ENCODE measurements at regions of chr2 and their contacts with region 1.

Region 1: DNA sequence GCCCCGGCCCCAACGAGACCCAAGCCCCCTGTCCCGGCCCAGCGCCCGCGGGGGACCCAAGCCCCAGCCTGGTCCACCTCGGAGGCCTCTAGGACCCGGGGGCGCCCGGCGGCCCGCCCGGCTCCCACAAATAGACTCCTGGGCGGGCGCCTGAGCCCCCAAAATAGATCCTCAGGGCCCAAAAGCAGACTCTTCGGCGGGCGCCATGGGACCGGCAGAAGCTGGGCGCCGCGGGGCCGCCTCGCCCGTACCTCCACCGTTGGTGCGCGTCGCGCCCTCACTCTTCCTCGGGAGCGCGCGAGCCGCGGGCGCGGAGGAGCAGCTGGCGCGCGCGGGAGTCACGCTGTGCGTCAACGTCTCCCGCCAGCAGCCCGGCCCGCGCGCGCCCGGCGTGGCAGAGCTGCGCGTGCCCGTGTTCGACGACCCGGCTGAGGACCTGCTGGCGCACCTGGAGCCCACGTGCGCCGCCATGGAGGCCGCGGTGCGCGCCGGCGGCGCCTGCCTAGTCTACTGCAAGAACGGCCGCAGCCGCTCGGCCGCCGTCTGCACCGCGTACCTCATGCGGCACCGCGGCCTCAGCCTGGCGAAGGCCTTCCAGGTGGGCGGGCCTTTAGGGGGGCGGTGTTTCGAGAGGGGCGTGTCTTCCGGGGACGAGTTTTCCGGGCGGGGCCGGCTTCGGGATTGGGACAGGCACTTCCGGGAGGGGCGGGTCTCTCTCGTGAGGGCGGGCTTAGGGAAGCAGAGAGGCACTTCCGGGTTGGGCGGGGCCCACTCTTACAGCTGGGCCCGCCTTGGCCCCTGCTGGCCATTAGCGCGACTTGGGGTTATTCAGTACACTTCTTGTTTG is 546 bp downstream of the DUSP28 start:
- DNase-seq: peak; percentile 98
- H3K4me3 Mint-ChIP-seq: peak overlapping the region; percentile 83
- H3K27ac Mint-ChIP-seq: peak overlapping the region; percentile 87
- H3K4me1 Mint-ChIP-seq: peaks cover 63% of the 10 kb centered on the region
- H3K27me3 Mint-ChIP-seq: no peaks in the 10 kb centered on the region

Region 2: DNA sequence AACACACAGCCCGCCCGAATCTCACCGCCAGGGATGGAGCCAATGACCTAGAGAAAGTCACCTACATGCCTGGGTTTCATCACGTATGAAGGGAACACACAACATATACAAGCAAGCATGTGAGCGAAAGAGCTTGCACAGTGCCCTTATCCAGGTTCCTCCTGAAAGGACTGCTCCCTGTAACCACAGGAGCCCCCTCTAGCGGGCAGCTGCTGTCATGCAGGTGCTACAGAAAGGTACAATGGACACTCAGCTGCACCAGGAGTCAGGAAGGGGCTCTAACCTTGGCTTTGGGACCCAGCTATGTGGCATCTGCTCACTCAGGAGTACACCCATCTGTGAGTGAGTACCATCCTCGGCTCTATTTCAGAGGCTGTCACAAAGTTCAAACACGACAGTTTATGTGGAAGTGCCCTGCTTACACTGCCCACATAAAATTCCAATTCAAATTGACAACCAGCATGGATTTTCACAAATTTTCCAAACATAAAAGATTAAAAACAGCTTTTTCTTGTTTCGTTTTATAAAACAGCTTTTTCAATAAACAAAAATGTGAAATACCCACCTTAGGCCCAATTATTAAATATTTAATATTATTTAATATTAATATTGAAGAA is 539.1 kb before region 1 on chr2:
- intact Hi-C with region 1: loop called (anchors 2 kb)
- DNase-seq: peak; percentile 48
- H3K4me3 Mint-ChIP-seq: no peak overlapping the region
- H3K27ac Mint-ChIP-seq: no peak overlapping the region
- H3K4me1 Mint-ChIP-seq: peaks cover 19% of the 10 kb centered on the region
- H3K27me3 Mint-ChIP-seq: no peaks in the 10 kb centered on the region

Region 3: DNA sequence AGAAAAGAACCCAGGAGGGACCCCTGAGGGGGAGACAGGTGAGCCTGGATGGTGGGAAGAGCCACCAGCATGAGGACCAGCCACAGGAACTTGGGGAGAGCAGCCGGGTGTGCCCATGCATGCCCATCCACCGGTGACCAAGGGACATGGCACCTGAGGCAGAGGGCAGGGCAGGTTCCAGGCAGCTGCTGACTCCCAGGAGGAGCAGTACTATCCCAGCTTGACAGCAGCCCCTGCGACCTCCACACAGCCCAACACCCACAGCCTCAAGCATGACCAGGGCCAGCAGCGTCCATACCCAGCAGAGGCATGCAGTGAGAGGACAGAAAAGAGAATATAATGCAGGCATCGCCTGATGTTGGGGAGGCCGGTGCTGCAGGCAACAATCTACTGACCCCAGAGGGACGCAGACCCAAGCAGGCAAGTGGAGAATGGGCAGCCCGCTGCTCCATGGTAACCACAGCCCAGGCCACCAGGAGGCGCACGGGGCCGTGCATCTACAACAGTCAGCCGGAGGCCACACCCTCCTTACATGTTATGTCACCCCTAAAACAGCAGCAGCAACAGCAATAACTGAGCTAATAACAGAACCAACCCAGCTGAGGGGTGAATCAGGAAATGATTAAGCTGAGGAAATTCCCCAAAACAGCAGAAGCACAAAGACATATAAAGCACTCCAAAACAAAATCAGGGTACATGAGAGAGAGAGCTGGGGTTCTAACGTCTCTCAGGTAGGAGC is 47.0 kb before region 1 on chr2:
- intact Hi-C with region 1: loop called (anchors 1 kb)
- DNase-seq: peak; percentile 74
- H3K4me3 Mint-ChIP-seq: no peak overlapping the region
- H3K27ac Mint-ChIP-seq: peak overlapping the region; percentile 43
- H3K4me1 Mint-ChIP-seq: peaks cover 11% of the 10 kb centered on the region
- H3K27me3 Mint-ChIP-seq: no peaks in the 10 kb centered on the region

Region 4: GRCh38 chr2:240595496-240596470 is 35.1 kb after region 1 on chr2:
- intact Hi-C with region 1: no loop called
- DNase-seq: peak; percentile 43
- H3K4me3 Mint-ChIP-seq: no peak overlapping the region
- H3K27ac Mint-ChIP-seq: no peak overlapping the region
- H3K4me1 Mint-ChIP-seq: no peaks in the 10 kb centered on the region
- H3K27me3 Mint-ChIP-seq: no peaks in the 10 kb centered on the region

Region 5: GRCh38 chr2:240624950-240625621 is 64.4 kb after region 1 on chr2 and contains the start of gene GPR35:
- intact Hi-C with region 1: loop called (anchors 1 kb)
- DNase-seq: peak; percentile 79
- H3K4me3 Mint-ChIP-seq: peak within 1 kb of the TSS; percentile 79
- H3K27ac Mint-ChIP-seq: peak within 1 kb of the TSS; percentile 85
- H3K4me1 Mint-ChIP-seq: peaks cover 47% of the 10 kb centered on the region
- H3K27me3 Mint-ChIP-seq: no peaks in the 10 kb centered on the region
- total RNA-seq, gene GPR35: 24.9 and 27.4 TPM in 2 replicates

Region 6: GRCh38 chr2:241217320-241218031 is 656.8 kb after region 1 on chr2:
- intact Hi-C with region 1: loop called (anchors 5 kb)
- DNase-seq: peak; percentile 21
- H3K4me3 Mint-ChIP-seq: peak overlapping the region; percentile 79
- H3K27ac Mint-ChIP-seq: no peak overlapping the region
- H3K4me1 Mint-ChIP-seq: peaks cover 7% of the 10 kb centered on the region
- H3K27me3 Mint-ChIP-seq: peaks cover 19% of the 10 kb centered on the region

Measured in activated T-helper 2 cell treated with anti-CD3 and anti-CD28 coated beads, Interferon-gamma antibody, Interleukin-2, Interleukin-4, amounts not matched to agents 10 μg/mL and 5 μg/mL and 100 μg/mL, durations not matched to agents 14 hours and 24 hours and 36 hours (primary cell).